ENCODE measurements at regions of chr2 and their contacts with region 1.

Region 1: DNA sequence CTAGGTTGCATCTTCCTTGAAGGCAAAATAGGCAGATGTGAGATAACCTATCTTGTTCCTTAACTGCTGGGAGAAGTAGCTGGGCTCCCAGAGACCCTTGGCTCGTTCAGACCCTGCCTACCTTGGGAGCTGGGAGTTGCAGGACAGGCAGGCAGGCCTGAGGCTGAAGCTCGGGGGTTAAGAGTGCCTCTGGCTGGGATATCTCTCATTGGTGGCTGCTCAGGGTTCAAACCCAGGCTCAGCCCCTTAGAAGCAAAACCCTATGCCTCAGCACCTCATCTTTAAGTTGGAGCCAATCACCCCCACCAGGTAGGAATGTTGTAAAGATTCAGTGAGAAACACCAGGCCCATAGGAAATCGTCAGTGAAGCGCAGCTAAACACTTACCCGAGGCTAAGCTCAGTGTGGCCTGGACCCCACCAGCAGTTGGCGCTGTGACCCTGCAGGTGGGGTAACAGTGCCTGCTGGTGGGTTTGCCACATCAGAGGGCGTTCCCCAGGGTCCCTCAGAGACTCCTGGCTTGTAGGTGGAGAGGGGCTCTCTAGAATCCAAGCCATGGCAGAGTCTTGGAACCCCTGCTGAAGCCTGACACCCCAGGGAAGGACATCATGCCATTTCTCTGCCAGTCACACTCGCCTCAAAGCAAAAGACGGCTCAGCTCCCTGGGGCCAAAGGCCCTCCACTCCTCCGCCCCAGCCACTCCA is 54.6 kb upstream of the GPR17 start:
- DNase-seq: peak; percentile 68 to 88
- H3K4me3 ChIP-seq: no peak overlapping the region
- H3K27ac ChIP-seq: no peak overlapping the region
- H3K4me1 ChIP-seq: peaks cover 0 to 1% (median 0%) of the 10 kb centered on the region in 4 experiments; a peak in 1 of 7 replicates
- H3K27me3 ChIP-seq: no peaks in the 10 kb centered on the region
- CTCF ChIP-seq: peak; percentile 98 to 100 (median 100)
- EP300 ChIP-seq: no peak
- POLR2A ChIP-seq: no peak
- RAD21 ChIP-seq: peak; percentile 98 to 99

Region 2: DNA sequence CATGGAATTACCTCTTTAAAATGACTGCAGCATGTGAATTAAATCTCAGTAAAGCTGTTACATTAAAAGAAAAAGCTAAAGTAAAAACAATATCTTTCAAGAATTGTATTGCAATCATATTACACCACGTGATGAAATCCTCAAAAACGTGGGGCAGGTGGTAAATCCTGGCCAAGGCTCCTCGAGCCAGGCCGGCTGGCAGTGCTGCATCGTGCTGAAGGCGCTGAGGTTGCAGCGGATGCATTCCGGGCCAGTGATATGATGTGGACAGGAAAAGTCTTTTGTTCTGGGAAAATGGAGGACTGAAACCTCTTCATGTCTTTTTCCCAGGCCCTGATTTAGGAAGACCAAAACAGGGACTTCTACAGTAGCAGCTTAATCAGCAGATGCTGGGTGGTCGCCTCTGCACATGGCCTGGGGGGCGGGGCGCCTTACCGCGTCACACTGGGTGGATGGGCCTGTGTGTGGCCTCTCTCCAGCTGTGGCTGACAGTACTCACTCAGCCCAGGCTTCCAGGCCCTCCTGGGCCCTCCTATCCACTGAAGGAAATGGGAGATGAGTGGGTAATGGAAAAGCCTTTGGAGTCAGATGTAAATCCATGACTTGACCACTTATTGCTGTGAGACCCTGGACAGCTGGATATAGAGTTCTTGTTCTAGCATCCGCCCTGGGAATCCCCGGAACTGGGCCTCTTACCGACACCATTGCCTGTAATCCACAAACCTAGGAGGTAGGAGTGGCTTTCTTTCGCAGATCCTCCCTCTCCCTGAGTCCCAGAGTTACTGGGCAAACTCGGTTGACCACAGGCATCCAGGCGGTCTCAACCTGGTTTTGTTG is 128.0 kb before region 1 on chr2:
- CTCF ChIA-PET with region 1: no interaction called
- POLR2A ChIA-PET with region 1: no interaction called
- DNase-seq: peak in 1 of 2 experiments; percentile 87
- H3K4me3 ChIP-seq: no peak overlapping the region
- H3K27ac ChIP-seq: peak overlapping the region; percentile 37; the same call in 1 of the 2 replicates
- H3K4me1 ChIP-seq: peaks cover 3 to 10% (median 5%) of the 10 kb centered on the region in 4 experiments; a peak in 5 of 7 replicates
- H3K27me3 ChIP-seq: no peaks in the 10 kb centered on the region
- CTCF ChIP-seq: no peak
- EP300 ChIP-seq: no peak
- POLR2A ChIP-seq: peak in 1 of 2 experiments; percentile 50; a peak in 1 of 3 replicates
- RAD21 ChIP-seq: no peak

Region 3: DNA sequence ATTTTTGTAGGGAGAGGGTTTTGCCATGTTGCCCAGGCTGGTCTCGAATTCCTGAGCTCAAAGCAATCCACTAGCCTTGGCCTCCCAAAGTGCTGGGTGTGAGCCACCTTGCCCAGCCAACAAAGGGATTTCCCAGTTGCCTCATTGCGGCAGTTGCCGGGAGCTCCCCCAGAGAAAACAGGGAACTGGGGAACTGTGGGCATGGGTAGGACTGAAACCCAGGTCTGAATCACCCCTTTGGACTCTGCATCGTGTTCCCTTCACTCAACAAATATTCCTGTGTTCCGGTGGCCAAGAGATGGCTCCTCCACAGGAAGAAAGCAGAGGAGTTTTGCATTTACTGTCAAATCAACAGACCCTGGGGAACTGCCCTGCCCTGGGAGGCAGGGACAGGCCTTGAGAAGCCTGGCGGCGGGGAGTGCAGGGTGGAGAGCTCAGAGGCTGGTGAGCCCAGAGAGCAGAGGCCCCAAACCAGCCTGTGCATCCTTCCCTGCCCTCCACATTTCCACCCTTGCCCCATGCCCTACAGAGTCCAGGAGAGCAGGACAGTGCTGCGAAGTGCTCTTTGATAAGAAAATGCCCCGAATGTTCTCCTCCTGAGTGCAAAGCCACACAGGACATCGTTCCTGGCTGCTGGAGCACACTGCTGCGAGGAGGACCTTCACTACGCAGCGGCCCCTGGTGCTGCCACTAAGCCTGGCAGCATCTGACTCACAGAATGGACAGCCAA is 31.0 kb before region 1 on chr2:
- CTCF ChIA-PET with region 1: interaction called, 27 read pairs
- POLR2A ChIA-PET with region 1: no interaction called
- DNase-seq: no peak
- H3K4me3 ChIP-seq: no peak overlapping the region
- H3K27ac ChIP-seq: no peak overlapping the region
- H3K4me1 ChIP-seq: peaks cover 0 to 6% (median 4%) of the 10 kb centered on the region in 4 experiments; a peak in 3 of 7 replicates
- H3K27me3 ChIP-seq: no peaks in the 10 kb centered on the region
- CTCF ChIP-seq: peak in 1 of 3 experiments; percentile 4; a peak in 1 of 4 replicates
- EP300 ChIP-seq: no peak
- POLR2A ChIP-seq: no peak
- RAD21 ChIP-seq: no peak

Region 4: GRCh38 chr2:127576433-127577207 is 14.8 kb before region 1 on chr2:
- CTCF ChIA-PET with region 1: interaction called, 54 read pairs
- POLR2A ChIA-PET with region 1: interaction called, 5 read pairs
- DNase-seq: peak in 1 of 2 experiments; percentile 45
- H3K4me3 ChIP-seq: no peak overlapping the region
- H3K27ac ChIP-seq: no peak overlapping the region
- H3K4me1 ChIP-seq: no peaks in the 10 kb centered on the region; a peak in 1 of 7 replicates
- H3K27me3 ChIP-seq: no peaks in the 10 kb centered on the region; a peak in 1 of 7 replicates
- CTCF ChIP-seq: no peak
- EP300 ChIP-seq: no peak
- POLR2A ChIP-seq: no peak
- RAD21 ChIP-seq: no peak

Region 5: DNA sequence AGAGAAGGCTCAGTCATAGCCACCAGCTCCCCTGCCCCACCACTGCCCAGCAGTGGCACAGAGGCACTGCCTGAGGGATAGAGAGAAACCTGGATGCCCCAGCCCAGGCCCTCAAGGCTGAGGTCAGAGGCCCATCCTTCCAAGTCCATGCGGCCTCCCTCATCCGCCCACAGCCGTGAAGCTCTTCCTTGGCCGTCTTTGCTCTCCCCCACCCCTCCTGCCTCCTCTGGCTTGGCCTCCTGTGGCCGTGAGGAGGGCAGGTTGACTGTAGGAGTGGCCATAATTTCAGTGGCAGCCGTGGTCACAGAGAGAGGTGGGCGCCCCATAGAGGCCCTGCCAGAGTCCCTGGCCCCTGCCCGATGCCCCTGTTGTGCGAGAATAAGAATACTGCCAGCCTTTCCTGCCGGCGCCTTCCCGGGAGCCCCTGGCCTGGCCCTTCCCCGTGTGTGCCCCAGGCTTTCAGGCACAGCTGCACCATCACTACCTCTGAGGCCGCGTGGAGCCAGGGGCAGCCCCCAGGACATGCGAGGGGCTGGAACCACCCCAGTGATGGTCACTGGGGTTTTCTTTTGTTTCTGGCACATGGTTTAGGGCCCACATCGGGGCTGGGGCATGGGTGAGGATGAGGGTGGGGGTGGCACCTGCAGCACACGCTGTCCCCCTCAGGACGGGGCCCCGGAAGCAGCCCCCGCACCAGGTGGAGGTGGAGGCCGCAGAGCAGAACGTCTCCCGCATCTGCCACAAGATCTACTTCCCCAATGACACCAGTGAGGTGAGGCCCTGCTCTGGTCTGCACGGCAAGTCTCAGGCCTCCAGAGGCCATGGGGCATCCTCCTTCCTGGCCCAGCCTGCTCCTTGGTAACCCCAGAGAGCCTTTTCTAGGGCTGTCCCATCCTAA is 41.5 kb after region 1 on chr2:
- CTCF ChIA-PET with region 1: interaction called, 59 read pairs
- POLR2A ChIA-PET with region 1: no interaction called
- DNase-seq: no peak
- H3K4me3 ChIP-seq: no peak overlapping the region
- H3K27ac ChIP-seq: no peak overlapping the region
- H3K4me1 ChIP-seq: peaks cover 0 to 9% (median 2%) of the 10 kb centered on the region in 4 experiments; a peak in 5 of 7 replicates
- H3K27me3 ChIP-seq: no peaks in the 10 kb centered on the region
- CTCF ChIP-seq: no peak
- EP300 ChIP-seq: no peak
- POLR2A ChIP-seq: no peak
- RAD21 ChIP-seq: no peak

Region 6: GRCh38 chr2:127649684-127650040 is 58.3 kb after region 1 on chr2:
- CTCF ChIA-PET with region 1: interaction called, 160 read pairs
- POLR2A ChIA-PET with region 1: no interaction called
- DNase-seq: peak in 1 of 2 experiments; percentile 95
- H3K4me3 ChIP-seq: no peak overlapping the region
- H3K27ac ChIP-seq: no peak overlapping the region
- H3K4me1 ChIP-seq: peaks cover 0 to 5% (median under 1%) of the 10 kb centered on the region in 4 experiments; a peak in 2 of 7 replicates
- H3K27me3 ChIP-seq: peaks cover 0 to 2% (median 0%) of the 10 kb centered on the region in 4 experiments; a peak in 1 of 7 replicates
- CTCF ChIP-seq: peak in 2 of 3 experiments; percentile 84 to 90; a peak in 3 of 4 replicates
- EP300 ChIP-seq: no peak
- POLR2A ChIP-seq: no peak
- RAD21 ChIP-seq: peak; percentile 64 to 76

Region 7: GRCh38 chr2:127675331-127676261 is 84.2 kb after region 1 on chr2 and contains the start of gene LIMS2:
- CTCF ChIA-PET with region 1: interaction called, 18 read pairs
- POLR2A ChIA-PET with region 1: no interaction called
- DNase-seq: peak in 1 of 2 experiments; percentile 66
- H3K4me3 ChIP-seq: peak within 1 kb of the TSS; percentile 46 to 70 (median 66)
- H3K27ac ChIP-seq: no peak within 1 kb of the TSS
- H3K4me1 ChIP-seq: peaks cover 0 to 4% (median 0%) of the 10 kb centered on the region in 4 experiments; a peak in 3 of 7 replicates
- H3K27me3 ChIP-seq: peaks cover 10 to 57% (median 33%) of the 10 kb centered on the region in 4 experiments
- CTCF ChIP-seq: no peak
- EP300 ChIP-seq: no peak
- POLR2A ChIP-seq: no peak
- RAD21 ChIP-seq: peak; percentile 25 to 48; a peak in 3 of 4 replicates
- total RNA-seq, gene LIMS2: 4.8 and 4.9 TPM in 2 replicates